ENCODE measurements at regions of chr10 and their contacts with region 1.

Region 1: GRCh38 chr10:6202684-6203330 is at the start of gene PFKFB3:
- DNase-seq: peak; percentile 77 to 97
- H3K4me3 ChIP-seq: peak within 1 kb of the TSS; percentile 92 to 97
- H3K27ac ChIP-seq: peak within 1 kb of the TSS; percentile 96 to 99
- H3K4me1 ChIP-seq: peaks cover 0 to 40% of the 10 kb centered on the region in 2 donors
- H3K27me3 ChIP-seq: no peaks in the 10 kb centered on the region
- CTCF ChIP-seq: peak; percentile 95 to 99 (median 98)
- total RNA-seq, gene PFKFB3: 68.0 TPM

Region 2: GRCh38 chr10:5948999-5949759 is 253.6 kb before region 1 on chr10:
- intact Hi-C with region 1: loop called (anchors 5 kb)
- DNase-seq: peak; percentile 32 to 84
- H3K4me3 ChIP-seq: no peak overlapping the region
- H3K27ac ChIP-seq: peak overlapping the region in 1 of 2 donors; percentile 67
- H3K4me1 ChIP-seq: peaks cover 20 to 47% of the 10 kb centered on the region in 2 donors
- H3K27me3 ChIP-seq: no peaks in the 10 kb centered on the region
- CTCF ChIP-seq: peak; percentile 43 to 73 (median 66)

Region 3: GRCh38 chr10:6108603-6109443 is 94.0 kb before region 1 on chr10:
- intact Hi-C with region 1: loop called (anchors 2 kb)
- DNase-seq: no peak
- H3K4me3 ChIP-seq: no peak overlapping the region
- H3K27ac ChIP-seq: no peak overlapping the region
- H3K4me1 ChIP-seq: peaks cover 0 to 2% of the 10 kb centered on the region in 2 donors
- H3K27me3 ChIP-seq: no peaks in the 10 kb centered on the region
- CTCF ChIP-seq: peak; percentile 69 to 84 (median 82)

Region 4: GRCh38 chr10:6124666-6125065 is 78.1 kb before region 1 on chr10:
- intact Hi-C with region 1: no loop called
- DNase-seq: peak in 1 of 2 donors; percentile 83
- H3K4me3 ChIP-seq: peak overlapping the region in 1 of 2 donors; percentile 22
- H3K27ac ChIP-seq: peak overlapping the region; percentile 66 to 69
- H3K4me1 ChIP-seq: peaks cover 3 to 14% of the 10 kb centered on the region in 2 donors
- H3K27me3 ChIP-seq: no peaks in the 10 kb centered on the region
- CTCF ChIP-seq: no peak

Region 5: DNA sequence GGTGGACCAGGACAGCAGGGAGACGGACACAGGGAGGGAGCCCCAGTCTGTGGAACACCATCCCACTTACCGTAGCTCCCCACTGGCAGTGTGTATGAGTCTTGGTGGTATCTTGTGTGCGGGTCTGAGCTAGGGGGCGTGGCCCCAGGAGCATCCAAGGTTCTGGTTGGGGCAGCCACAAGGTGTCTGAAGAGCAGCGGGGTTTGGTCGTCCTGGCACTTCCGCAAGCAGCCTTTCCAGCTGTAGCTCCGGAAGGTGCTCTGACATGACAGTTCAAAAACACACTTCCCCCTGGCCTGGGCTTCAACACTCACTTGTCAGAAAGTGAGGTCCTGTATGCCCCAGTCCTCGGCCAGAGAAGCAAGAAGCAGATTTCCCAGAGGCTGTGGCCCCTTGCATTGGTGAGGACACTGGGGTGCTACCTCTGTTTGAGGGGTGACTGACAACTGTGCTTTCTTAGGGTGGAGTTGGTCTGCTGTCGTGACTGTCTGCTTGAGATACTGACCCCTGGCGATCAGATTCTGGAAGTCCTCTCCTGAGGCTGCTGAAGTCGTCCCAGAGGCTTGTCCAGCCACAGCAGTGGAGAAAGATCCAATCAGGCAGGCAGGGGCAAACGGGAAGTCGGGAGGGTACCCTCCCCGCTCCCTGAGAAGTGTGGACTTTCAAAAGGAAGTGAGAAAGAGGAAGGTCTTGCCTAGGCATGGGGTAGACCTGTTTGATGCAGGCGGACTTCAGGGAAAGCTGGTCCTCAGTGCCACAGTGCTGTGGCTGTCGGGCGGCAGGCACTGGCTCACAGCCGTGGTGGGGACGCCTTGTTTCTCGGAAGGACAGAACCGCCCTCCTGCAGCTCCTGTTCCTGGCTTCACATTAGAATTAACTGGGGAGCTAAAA is 51.5 kb before region 1 on chr10:
- intact Hi-C with region 1: loop called (anchors 2 kb)
- DNase-seq: peak in 1 of 2 donors; percentile 84
- H3K4me3 ChIP-seq: peak overlapping the region in 1 of 2 donors; percentile 43
- H3K27ac ChIP-seq: peak overlapping the region; percentile 59 to 72
- H3K4me1 ChIP-seq: peaks cover 0 to 8% of the 10 kb centered on the region in 2 donors
- H3K27me3 ChIP-seq: no peaks in the 10 kb centered on the region
- CTCF ChIP-seq: peak; percentile 61 to 73 (median 70)

Region 6: DNA sequence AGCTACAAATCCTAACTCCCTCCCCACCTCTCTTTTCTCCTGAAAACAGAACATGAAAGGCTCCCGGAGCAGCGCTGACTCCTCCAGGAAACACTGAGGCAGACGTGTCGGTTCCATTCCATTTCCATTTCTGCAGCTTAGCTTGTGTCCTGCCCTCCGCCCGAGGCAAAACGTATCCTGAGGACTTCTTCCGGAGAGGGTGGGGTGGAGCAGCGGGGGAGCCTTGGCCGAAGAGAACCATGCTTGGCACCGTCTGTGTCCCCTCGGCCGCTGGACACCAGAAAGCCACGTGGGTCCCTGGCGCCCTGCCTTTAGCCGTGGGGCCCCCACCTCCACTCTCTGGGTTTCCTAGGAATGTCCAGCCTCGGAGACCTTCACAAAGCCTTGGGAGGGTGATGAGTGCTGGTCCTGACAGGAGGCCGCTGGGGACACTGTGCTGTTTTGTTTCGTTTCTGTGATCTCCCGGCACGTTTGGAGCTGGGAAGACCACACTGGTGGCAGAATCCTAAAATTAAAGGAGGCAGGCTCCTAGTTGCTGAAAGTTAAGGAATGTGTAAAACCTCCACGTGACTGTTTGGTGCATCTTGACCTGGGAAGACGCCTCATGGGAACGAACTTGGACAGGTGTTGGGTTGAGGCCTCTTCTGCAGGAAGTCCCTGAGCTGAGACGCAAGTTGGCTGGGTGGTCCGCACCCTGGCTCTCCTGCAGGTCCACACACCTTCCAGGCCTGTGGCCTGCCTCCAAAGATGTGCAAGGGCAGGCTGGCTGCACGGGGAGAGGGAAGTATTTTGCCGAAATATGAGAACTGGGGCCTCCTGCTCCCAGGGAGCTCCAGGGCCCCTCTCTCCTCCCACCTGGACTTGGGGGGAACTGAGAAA is 30.3 kb after region 1 on chr10:
- intact Hi-C with region 1: no loop called
- DNase-seq: no peak
- H3K4me3 ChIP-seq: no peak overlapping the region
- H3K27ac ChIP-seq: peak overlapping the region; percentile 2 to 66
- H3K4me1 ChIP-seq: peaks cover 0 to under 1% of the 10 kb centered on the region in 2 donors
- H3K27me3 ChIP-seq: no peaks in the 10 kb centered on the region
- CTCF ChIP-seq: no peak

Region 7: GRCh38 chr10:6247041-6247712 is 44.4 kb after region 1 on chr10:
- intact Hi-C with region 1: no loop called
- DNase-seq: peak in 1 of 2 donors; percentile 63
- H3K4me3 ChIP-seq: no peak overlapping the region
- H3K27ac ChIP-seq: peak overlapping the region; percentile 79 to 84
- H3K4me1 ChIP-seq: peaks cover 0 to 13% of the 10 kb centered on the region in 2 donors
- H3K27me3 ChIP-seq: no peaks in the 10 kb centered on the region
- CTCF ChIP-seq: no peak

Region 8: DNA sequence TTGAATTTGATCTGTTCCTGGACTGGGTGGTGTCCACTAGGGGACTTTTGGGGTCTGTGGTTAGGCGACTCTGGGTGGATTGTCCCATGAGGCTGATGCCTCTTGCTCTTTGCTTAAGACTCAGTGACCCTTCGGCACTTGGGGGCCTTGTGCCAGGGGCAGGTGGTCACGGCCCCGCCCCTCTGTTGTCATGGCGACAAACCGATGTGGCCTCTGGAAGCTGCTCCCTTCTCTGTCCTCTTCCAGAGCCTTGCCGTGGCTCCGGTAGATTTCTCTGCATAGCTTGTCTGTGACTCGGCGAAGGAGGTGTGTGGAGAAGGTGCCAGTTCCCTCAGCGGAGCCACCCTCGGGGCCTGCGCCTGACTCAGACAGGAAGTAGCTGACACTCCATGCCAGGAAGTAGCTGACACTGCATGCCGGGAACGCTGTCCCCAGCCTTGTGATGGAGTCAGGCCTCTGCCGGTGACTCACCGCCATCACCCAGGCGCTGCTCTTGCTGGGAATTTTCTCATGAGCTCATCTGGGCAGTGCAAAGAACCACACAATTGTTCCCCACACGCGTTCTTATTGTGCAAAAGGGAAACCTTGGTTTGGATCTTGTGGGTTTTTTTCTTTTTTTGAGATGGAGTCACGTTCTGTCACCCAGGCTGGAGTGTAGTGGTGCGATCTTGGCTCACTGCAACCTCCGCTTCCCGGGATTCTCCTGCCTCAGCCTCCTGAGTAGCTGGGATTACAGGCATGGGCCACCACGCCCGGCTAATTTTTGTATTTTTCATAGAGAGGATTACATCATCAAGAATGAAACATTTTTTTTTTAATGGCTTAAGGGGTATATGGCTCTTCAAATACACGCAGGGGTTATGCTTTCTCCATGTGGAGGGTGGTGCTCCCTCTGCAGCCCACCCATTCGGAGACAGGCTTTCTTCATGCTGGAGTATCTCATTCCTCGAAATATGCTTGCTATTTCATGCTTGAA is 72.5 kb after region 1 on chr10:
- intact Hi-C with region 1: loop called (anchors 2 kb)
- DNase-seq: peak; percentile 99
- H3K4me3 ChIP-seq: peak overlapping the region; percentile 23 to 32
- H3K27ac ChIP-seq: peak overlapping the region; percentile 95 to 97
- H3K4me1 ChIP-seq: peaks cover 10 to 47% of the 10 kb centered on the region in 2 donors
- H3K27me3 ChIP-seq: no peaks in the 10 kb centered on the region
- CTCF ChIP-seq: no peak